WTC11 (cell line): ENCODE measurements at regions of chr9 and their contacts with region 1.

Region 1: GRCh38 chr9:37668116-37668601 is 17.4 kb downstream of the FRMPD1 start:
- DNase-seq: peak; percentile 62
- ATAC-seq: peak; percentile 95
- H3K4me3 Mint-ChIP-seq: no peak overlapping the region
- H3K27ac Mint-ChIP-seq: 0 out of 2 replicates have a peak overlapping the region, but pooled peaks have one; percentile 17
- H3K4me1 Mint-ChIP-seq: peaks cover 40% of the 10 kb centered on the region
- H3K27me3 Mint-ChIP-seq: no peaks in the 10 kb centered on the region; the same call in none of the 2 replicates
- CTCF ChIP-seq: no peak

Region 2: DNA sequence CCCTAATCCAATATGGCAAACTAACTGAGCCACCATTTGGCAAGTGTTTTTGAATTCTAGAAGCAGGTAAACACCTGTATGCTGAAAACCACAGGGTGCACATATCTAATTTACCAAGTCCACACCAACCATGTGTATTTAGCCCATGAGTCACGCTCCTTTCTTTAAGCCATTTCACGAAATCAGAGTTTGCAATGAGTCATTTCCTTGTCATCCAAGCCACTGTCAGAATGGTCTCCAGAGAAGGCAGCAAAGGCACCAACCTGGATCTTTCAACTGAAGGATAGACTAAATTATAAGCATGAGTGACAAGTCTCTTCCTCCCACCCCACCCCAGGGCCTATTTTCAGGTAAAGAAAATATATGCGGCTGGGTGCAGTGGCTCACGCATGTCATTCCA is 744.1 kb before region 1 on chr9:
- CTCF ChIA-PET with region 1: no interaction called
- POLR2A ChIA-PET with region 1: no interaction called
- DNase-seq: no peak
- ATAC-seq: no peak
- H3K4me3 Mint-ChIP-seq: no peak overlapping the region
- H3K27ac Mint-ChIP-seq: no peak overlapping the region
- H3K4me1 Mint-ChIP-seq: 0 out of 2 replicates have a peak, but pooled peaks cover 4% of the 10 kb centered on the region
- H3K27me3 Mint-ChIP-seq: no peaks in the 10 kb centered on the region
- CTCF ChIP-seq: no peak

Region 3: GRCh38 chr9:37626708-37627293 is 41.4 kb before region 1 on chr9:
- CTCF ChIA-PET with region 1: interaction called, 16 read pairs
- POLR2A ChIA-PET with region 1: no interaction called
- DNase-seq: no peak
- ATAC-seq: no peak; the same call in 1 of the 2 replicates
- H3K4me3 Mint-ChIP-seq: no peak overlapping the region
- H3K27ac Mint-ChIP-seq: no peak overlapping the region
- H3K4me1 Mint-ChIP-seq: peaks cover 21% of the 10 kb centered on the region
- H3K27me3 Mint-ChIP-seq: no peaks in the 10 kb centered on the region; the same call in 1 of the 2 replicates
- CTCF ChIP-seq: no peak

Region 4: GRCh38 chr9:37656936-37657335 is 11.2 kb before region 1 on chr9:
- CTCF ChIA-PET with region 1: interaction called, 12 read pairs
- POLR2A ChIA-PET with region 1: no interaction called
- DNase-seq: no peak
- ATAC-seq: no peak
- H3K4me3 Mint-ChIP-seq: no peak overlapping the region
- H3K27ac Mint-ChIP-seq: no peak overlapping the region
- H3K4me1 Mint-ChIP-seq: peaks cover under 1% of the 10 kb centered on the region; the same call in 1 of the 2 replicates
- H3K27me3 Mint-ChIP-seq: peaks cover 44% of the 10 kb centered on the region
- CTCF ChIP-seq: no peak

Region 5: GRCh38 chr9:37678789-37679273 is 10.7 kb after region 1 on chr9:
- CTCF ChIA-PET with region 1: interaction called, 12 read pairs
- POLR2A ChIA-PET with region 1: no interaction called
- DNase-seq: no peak
- ATAC-seq: peak; percentile 52; the same call in 1 of the 2 replicates
- H3K4me3 Mint-ChIP-seq: no peak overlapping the region
- H3K27ac Mint-ChIP-seq: no peak overlapping the region
- H3K4me1 Mint-ChIP-seq: no peaks in the 10 kb centered on the region
- H3K27me3 Mint-ChIP-seq: no peaks in the 10 kb centered on the region; the same call in 1 of the 2 replicates
- CTCF ChIP-seq: no peak